GM12878 (cell line): ENCODE measurements at regions of chr12 and their contacts with region 1.

Region 1: GRCh38 chr12:94405413-94406116 is 54.1 kb downstream of the CEP83 start:
- DNase-seq: peak; percentile 47
- ATAC-seq: peak; percentile 96
- H3K4me3 ChIP-seq: peak overlapping the region; percentile 60
- H3K27ac ChIP-seq: peak overlapping the region; percentile 91
- H3K4me1 ChIP-seq: no peaks in the 10 kb centered on the region
- H3K27me3 ChIP-seq: no peaks in the 10 kb centered on the region
- CTCF ChIP-seq: no peak
- EP300 ChIP-seq: no peak; a peak in 1 of 4 replicates
- POLR2A ChIP-seq: no peak
- RAD21 ChIP-seq: no peak; the same call in 1 of the 2 replicates

Region 2: GRCh38 chr12:94379479-94380113 is 26.0 kb before region 1 on chr12:
- CTCF ChIA-PET with region 1: interaction called, 4 read pairs
- POLR2A ChIA-PET with region 1: no interaction called
- RAD21 ChIA-PET with region 1: interaction called, 11 read pairs
- SMC1A ChIA-PET with region 1: interaction called, 10 read pairs
- in situ Hi-C with region 1: no loop called
- intact Hi-C with region 1: no loop called
- DNase-seq: no peak
- ATAC-seq: peak; percentile 58; the same call in 2 of the 3 replicates
- H3K4me3 ChIP-seq: no peak overlapping the region
- H3K27ac ChIP-seq: no peak overlapping the region
- H3K4me1 ChIP-seq: peaks cover 4% of the 10 kb centered on the region
- H3K27me3 ChIP-seq: no peaks in the 10 kb centered on the region
- CTCF ChIP-seq: no peak
- EP300 ChIP-seq: no peak
- POLR2A ChIP-seq: no peak
- RAD21 ChIP-seq: no peak

Region 3: GRCh38 chr12:94418517-94418916 is 13.0 kb after region 1 on chr12:
- CTCF ChIA-PET with region 1: no interaction called
- POLR2A ChIA-PET with region 1: no interaction called
- RAD21 ChIA-PET with region 1: no interaction called
- SMC1A ChIA-PET with region 1: interaction called, 18 read pairs
- in situ Hi-C with region 1: no loop called
- intact Hi-C with region 1: no loop called
- DNase-seq: no peak
- ATAC-seq: no peak
- H3K4me3 ChIP-seq: no peak overlapping the region
- H3K27ac ChIP-seq: no peak overlapping the region
- H3K4me1 ChIP-seq: no peaks in the 10 kb centered on the region
- H3K27me3 ChIP-seq: no peaks in the 10 kb centered on the region
- CTCF ChIP-seq: no peak
- EP300 ChIP-seq: no peak
- POLR2A ChIP-seq: no peak
- RAD21 ChIP-seq: no peak

Region 4: DNA sequence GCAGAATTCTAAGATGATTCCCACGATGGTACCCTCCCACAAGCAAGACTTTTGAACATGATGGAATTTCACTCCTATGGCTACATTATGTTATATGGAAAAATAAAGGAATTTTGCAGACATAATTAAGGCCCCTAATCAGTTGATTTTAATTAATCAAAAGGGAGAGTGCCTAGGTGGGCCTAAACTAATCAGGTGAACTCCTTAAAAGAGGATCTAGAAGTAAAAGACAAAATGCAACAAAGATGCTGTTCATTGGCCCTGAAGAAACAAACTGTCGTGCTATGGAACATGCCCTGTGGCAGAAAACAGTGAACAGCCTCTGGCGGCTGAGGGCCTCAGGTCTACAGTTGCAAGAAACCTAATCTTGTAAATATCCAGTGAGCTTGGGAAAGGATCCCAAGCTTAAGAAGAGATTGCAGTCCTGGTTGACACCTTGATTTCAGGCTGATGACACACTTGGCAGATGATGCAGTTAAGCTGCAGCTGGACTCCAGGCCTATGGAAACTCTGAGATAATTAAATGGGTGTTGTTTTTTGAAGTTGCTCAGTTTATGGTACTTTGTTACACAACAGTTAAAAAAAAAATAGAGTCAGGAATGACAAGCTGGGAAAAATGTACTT is 231.0 kb after region 1 on chr12:
- CTCF ChIA-PET with region 1: no interaction called
- POLR2A ChIA-PET with region 1: no interaction called
- RAD21 ChIA-PET with region 1: no interaction called
- SMC1A ChIA-PET with region 1: no interaction called
- in situ Hi-C with region 1: no loop called
- intact Hi-C with region 1: no loop called
- DNase-seq: no peak
- ATAC-seq: no peak
- H3K4me3 ChIP-seq: no peak overlapping the region
- H3K27ac ChIP-seq: no peak overlapping the region
- H3K4me1 ChIP-seq: peaks cover 18% of the 10 kb centered on the region
- H3K27me3 ChIP-seq: no peaks in the 10 kb centered on the region
- CTCF ChIP-seq: no peak
- EP300 ChIP-seq: no peak
- POLR2A ChIP-seq: no peak
- RAD21 ChIP-seq: no peak